T-cell (primary cell): ENCODE measurements at regions of chr2 and their contacts with region 1.

Region 1: DNA sequence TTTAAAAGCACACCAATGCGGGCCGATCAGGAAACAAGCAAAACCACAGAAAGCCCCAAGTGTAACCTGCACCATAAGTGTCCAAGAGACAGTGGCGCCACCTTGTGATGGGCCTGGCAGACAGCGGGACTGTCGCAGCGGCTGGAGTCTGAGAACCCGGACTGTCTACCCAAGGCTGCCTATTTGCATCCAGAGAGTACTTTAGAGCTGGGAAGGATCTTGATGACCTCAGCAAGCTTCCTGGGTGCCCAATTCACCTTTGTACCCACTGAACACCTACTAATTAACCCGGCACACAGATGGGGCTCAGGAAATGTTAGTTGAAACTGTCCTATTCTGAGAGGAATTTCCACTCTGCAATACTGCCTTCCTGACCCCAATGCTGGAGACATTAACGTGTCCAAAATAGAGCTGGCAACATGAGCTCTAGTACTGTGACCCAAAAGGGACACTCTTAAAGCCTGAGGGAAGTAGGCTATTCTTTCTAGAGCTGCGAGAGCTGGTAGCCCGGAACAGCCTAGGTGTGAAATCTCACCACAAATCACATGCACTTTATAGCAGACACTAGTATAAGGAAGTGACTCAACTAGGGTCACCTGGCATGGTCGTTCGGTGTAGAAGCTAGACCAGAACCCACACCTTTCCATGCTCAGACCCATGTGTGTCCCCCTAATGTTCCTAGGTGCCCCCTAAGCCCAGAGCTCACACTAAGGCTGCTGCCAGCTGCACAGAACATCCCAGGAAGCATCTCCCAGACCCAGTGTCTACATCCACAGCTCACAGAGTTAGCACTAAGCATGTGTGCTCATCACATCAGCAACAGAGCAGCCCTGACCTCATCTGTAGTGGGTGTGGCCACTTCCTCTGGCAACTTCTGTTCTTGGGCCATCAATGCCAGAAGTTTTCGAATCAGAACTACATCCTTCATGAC is 25.4 kb downstream of the POLR1A start:
- DNase-seq: peak; percentile 66 to 90 (median 83)
- ATAC-seq: peak; percentile 77 to 88 (median 84)
- H3K4me3 ChIP-seq: no peak overlapping the region
- H3K4me3 Mint-ChIP-seq: peak overlapping the region in 1 of 3 donors; percentile 10
- H3K27ac ChIP-seq: peak overlapping the region; percentile 82
- H3K27ac Mint-ChIP-seq: peak overlapping the region; percentile 87 to 88
- H3K4me1 ChIP-seq: peaks cover 0 to 34% of the 10 kb centered on the region in 2 experiments
- H3K4me1 Mint-ChIP-seq: peaks cover 24 to 36% (median 33%) of the 10 kb centered on the region in 3 donors
- H3K27me3 ChIP-seq: no peaks in the 10 kb centered on the region
- H3K27me3 Mint-ChIP-seq: no peaks in the 10 kb centered on the region

Region 2: DNA sequence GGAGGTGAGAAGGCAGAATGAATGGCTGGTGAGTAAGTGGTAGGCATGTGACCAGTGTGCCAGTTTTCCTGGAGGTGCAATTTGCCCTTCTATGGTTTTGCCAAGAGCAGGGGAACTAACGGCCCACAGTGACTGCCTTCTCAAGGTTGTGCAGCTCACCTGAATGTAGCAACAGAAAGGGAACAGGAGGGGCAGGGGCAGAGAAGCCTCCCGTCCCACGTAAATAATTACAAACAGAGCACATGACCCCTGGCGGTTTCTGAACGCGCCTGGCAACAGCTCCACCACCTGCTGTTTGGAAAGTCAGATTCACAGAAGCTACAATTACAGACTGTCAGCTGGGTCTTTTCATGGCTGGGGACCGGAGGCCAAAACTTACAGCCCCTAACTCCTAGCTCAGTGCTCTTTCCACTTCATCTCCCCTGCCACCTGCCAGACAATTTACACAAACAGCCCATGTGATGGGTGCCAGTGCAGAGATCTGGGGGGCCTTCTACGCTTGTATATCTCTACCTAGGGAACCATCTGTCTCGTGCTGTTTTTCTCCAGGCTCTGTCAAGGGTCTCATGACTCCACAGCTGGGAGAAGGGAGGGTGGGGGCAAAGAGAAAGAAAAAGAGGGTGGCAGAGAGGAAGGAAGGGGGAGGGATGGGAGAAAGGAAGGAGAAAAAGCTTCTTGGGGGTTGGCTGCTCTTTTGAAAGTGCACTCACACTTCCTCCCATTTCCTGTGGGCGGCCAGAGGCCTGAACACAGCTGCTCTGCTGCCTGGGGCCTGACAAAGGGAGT is 44.2 kb before region 1 on chr2:
- CTCF ChIA-PET with region 1: interaction called, 9 to 40 read pairs
- POLR2A ChIA-PET with region 1: interaction called in 1 of 2 experiments, 3 read pairs
- DNase-seq: peak; percentile 38 to 88 (median 75)
- ATAC-seq: peak; percentile 52 to 57 (median 54)
- H3K4me3 ChIP-seq: peak overlapping the region; percentile 27 to 30
- H3K4me3 Mint-ChIP-seq: peak overlapping the region; percentile 67 to 78 (median 74)
- H3K27ac ChIP-seq: peak overlapping the region; percentile 96
- H3K27ac Mint-ChIP-seq: peak overlapping the region; percentile 99
- H3K4me1 ChIP-seq: peaks cover 65 to 84% of the 10 kb centered on the region in 2 experiments
- H3K4me1 Mint-ChIP-seq: peaks cover 85 to 96% (median 89%) of the 10 kb centered on the region in 3 donors
- H3K27me3 ChIP-seq: no peaks in the 10 kb centered on the region
- H3K27me3 Mint-ChIP-seq: no peaks in the 10 kb centered on the region

Region 3: GRCh38 chr2:86062043-86062442 is 18.2 kb before region 1 on chr2:
- CTCF ChIA-PET with region 1: no interaction called
- POLR2A ChIA-PET with region 1: no interaction called
- DNase-seq: no peak
- ATAC-seq: no peak
- H3K4me3 ChIP-seq: no peak overlapping the region
- H3K4me3 Mint-ChIP-seq: no peak overlapping the region
- H3K27ac ChIP-seq: no peak overlapping the region
- H3K27ac Mint-ChIP-seq: no peak overlapping the region
- H3K4me1 ChIP-seq: no peaks in the 10 kb centered on the region
- H3K4me1 Mint-ChIP-seq: peaks cover 0 to 5% (median 0%) of the 10 kb centered on the region in 3 donors
- H3K27me3 ChIP-seq: no peaks in the 10 kb centered on the region
- H3K27me3 Mint-ChIP-seq: no peaks in the 10 kb centered on the region